Vagina (tissue), 2 donors: ENCODE measurements at regions of chr7 and their contacts with region 1.

Region 1: GRCh38 chr7:159091480-159092475 is 52.9 kb downstream of the VIPR2 start:
- DNase-seq: no peak
- H3K4me3 ChIP-seq: no peak overlapping the region
- H3K27ac ChIP-seq: no peak overlapping the region
- H3K4me1 ChIP-seq: peaks cover 5% of the 10 kb centered on the region
- H3K27me3 ChIP-seq: no peaks in the 10 kb centered on the region
- CTCF ChIP-seq: no peak
- POLR2A ChIP-seq: no peak

Region 2: GRCh38 chr7:159075563-159076238 is 16.1 kb before region 1 on chr7:
- intact Hi-C with region 1: loop called (anchors 2 kb)
- DNase-seq: peak; percentile 7 to 80
- H3K4me3 ChIP-seq: no peak overlapping the region
- H3K27ac ChIP-seq: peak overlapping the region; percentile 30
- H3K4me1 ChIP-seq: peaks cover 4% of the 10 kb centered on the region
- H3K27me3 ChIP-seq: no peaks in the 10 kb centered on the region
- CTCF ChIP-seq: no peak
- POLR2A ChIP-seq: no peak